MCF 10A (cell line): ENCODE measurements at regions of chr4 and their contacts with region 1.

Region 1: DNA sequence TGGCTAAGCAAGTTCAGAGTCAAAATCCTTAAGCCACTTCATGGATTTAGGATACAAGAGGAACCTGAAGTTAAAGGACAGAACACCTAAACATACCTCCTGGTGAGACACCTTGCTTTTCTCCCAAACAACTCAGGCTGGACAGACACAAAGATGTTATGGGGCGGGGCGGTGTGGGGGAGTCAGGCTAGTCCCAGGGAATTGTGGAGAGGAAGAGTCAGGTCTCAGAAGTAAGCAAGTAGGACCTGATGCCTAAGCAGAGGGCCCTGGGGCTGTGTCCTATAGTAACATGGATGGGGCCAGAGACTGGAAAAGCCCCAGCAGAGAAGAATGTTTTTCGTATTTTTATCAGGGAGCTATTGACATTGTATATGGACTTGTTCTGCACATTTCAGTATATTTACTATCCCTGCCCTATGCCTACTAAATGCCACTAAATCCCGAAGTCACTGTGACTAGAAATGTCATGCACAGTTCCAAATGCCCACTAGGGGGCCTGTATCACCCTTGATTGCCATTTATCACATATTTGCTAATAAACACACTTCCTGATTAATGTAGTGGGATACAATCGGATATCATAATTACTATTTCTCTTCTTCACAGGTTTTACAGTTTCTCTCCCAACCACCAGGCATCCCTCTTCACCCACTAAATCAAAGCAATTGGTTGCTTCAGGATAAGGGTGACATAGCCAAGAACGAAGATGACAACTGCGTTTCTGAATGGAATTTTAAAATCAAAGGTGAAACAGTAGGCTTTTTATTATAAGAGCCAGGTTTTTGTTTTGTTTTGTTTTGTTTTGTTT is 23.8 kb upstream of the ARHGAP10 start:
- DNase-seq: peak; percentile 71
- H3K4me3 Mint-ChIP-seq: no peak overlapping the region
- H3K27ac Mint-ChIP-seq: no peak overlapping the region
- H3K4me1 Mint-ChIP-seq: peaks cover 12% of the 10 kb centered on the region
- H3K27me3 Mint-ChIP-seq: no peaks in the 10 kb centered on the region
- CTCF ChIP-seq: peak; percentile 76

Region 2: GRCh38 chr4:147019061-147019460 is 689.0 kb before region 1 on chr4:
- CTCF ChIA-PET with region 1: no interaction called
- POLR2A ChIA-PET with region 1: no interaction called
- intact Hi-C with region 1: loop called (anchors 5 kb)
- DNase-seq: peak; percentile 84
- H3K4me3 Mint-ChIP-seq: no peak overlapping the region
- H3K27ac Mint-ChIP-seq: no peak overlapping the region
- H3K4me1 Mint-ChIP-seq: peaks cover 26% of the 10 kb centered on the region
- H3K27me3 Mint-ChIP-seq: no peaks in the 10 kb centered on the region
- CTCF ChIP-seq: peak; percentile 89

Region 3: DNA sequence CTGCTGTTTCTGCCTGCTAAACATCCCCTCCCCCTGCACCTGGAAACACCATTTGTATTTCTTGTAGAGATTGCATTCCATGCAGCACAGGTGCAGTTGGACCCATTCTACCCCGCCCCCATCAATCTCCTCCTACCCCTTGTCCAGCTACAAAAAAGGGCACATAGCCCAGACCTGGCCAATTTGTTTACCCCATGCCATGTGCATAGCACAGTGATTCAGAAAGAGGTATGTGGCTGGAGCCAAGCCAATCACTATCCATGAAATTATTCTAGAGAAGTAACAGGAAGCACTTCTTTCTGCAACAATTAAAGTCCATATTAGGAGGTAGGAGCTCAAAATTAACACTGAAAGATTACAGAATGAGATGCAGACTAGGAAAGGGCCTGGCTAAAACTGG is 111.1 kb before region 1 on chr4:
- CTCF ChIA-PET with region 1: interaction called, 4 read pairs
- POLR2A ChIA-PET with region 1: no interaction called
- intact Hi-C with region 1: loop called (anchors 2 kb)
- DNase-seq: peak; percentile 94
- H3K4me3 Mint-ChIP-seq: no peak overlapping the region
- H3K27ac Mint-ChIP-seq: peak overlapping the region; percentile 97
- H3K4me1 Mint-ChIP-seq: peaks cover 35% of the 10 kb centered on the region
- H3K27me3 Mint-ChIP-seq: no peaks in the 10 kb centered on the region
- CTCF ChIP-seq: no peak

Region 4: GRCh38 chr4:147633113-147633512 is 75.0 kb before region 1 on chr4:
- CTCF ChIA-PET with region 1: no interaction called
- POLR2A ChIA-PET with region 1: no interaction called
- intact Hi-C with region 1: no loop called
- DNase-seq: no peak
- H3K4me3 Mint-ChIP-seq: no peak overlapping the region
- H3K27ac Mint-ChIP-seq: peak overlapping the region; percentile 66
- H3K4me1 Mint-ChIP-seq: no peaks in the 10 kb centered on the region
- H3K27me3 Mint-ChIP-seq: no peaks in the 10 kb centered on the region
- CTCF ChIP-seq: no peak

Region 5: DNA sequence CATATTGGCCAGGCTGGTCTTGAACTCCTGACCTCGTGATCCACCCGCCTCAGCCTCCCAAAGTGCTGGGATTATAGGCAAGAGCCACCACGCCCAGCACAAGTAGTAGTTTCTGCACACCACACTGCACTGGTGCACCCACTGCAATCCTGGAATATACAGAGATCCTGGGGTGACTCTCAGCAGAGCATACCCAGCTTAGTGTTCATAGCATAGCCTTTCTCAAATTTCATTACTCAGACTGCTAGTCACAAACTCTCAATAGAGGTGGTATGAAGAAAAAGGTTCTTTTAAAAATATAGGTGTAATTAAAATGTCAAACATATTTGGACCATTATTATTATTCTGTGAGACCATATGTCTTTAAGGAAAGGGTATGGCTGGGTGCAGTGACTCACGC is 17.6 kb after region 1 on chr4:
- CTCF ChIA-PET with region 1: interaction called, 17 read pairs
- POLR2A ChIA-PET with region 1: interaction called, 21 read pairs
- intact Hi-C with region 1: no loop called
- DNase-seq: no peak
- H3K4me3 Mint-ChIP-seq: no peak overlapping the region
- H3K27ac Mint-ChIP-seq: no peak overlapping the region
- H3K4me1 Mint-ChIP-seq: peaks cover 12% of the 10 kb centered on the region
- H3K27me3 Mint-ChIP-seq: no peaks in the 10 kb centered on the region
- CTCF ChIP-seq: no peak

Region 6: GRCh38 chr4:147780137-147780777 is 72.2 kb after region 1 on chr4:
- CTCF ChIA-PET with region 1: no interaction called
- POLR2A ChIA-PET with region 1: no interaction called
- intact Hi-C with region 1: no loop called
- DNase-seq: no peak
- H3K4me3 Mint-ChIP-seq: no peak overlapping the region
- H3K27ac Mint-ChIP-seq: no peak overlapping the region
- H3K4me1 Mint-ChIP-seq: peaks cover 24% of the 10 kb centered on the region
- H3K27me3 Mint-ChIP-seq: no peaks in the 10 kb centered on the region
- CTCF ChIP-seq: no peak

Region 7: DNA sequence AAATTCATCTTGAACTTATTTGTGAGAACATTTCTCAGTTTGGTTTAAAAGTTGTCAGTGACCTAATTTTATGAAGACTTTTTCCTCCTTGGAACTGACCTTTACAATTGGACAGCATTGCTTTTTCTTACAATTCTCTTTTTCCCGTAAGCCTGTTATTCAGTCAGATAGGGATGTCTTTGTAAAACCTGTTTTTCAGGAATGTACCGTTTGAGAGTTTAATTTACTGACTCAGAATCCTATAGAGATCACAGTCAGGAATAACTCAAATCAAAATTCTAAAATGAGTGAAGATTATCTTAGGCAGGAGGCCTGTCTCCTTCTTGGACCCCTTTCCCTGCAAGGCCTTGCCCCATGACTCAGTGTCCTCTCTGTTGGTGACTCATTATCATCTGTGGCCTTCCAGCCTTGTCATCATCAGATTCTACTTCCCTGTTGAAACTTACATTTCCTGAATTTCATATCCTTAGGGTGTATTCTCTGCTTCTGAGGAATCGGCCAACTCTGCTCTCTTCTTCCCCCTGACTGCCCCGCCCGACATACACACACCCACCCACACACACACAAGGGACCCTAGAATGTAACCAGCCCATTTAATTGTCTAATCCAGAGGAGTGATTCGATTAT is 123.6 kb after region 1 on chr4:
- CTCF ChIA-PET with region 1: interaction called, 13 read pairs
- POLR2A ChIA-PET with region 1: interaction called, 7 read pairs
- intact Hi-C with region 1: no loop called
- DNase-seq: peak; percentile 91
- H3K4me3 Mint-ChIP-seq: peak overlapping the region; percentile 36
- H3K27ac Mint-ChIP-seq: peak overlapping the region; percentile 92
- H3K4me1 Mint-ChIP-seq: peaks cover 38% of the 10 kb centered on the region
- H3K27me3 Mint-ChIP-seq: no peaks in the 10 kb centered on the region
- CTCF ChIP-seq: no peak

Region 8: GRCh38 chr4:147837435-147837834 is 129.4 kb after region 1 on chr4:
- CTCF ChIA-PET with region 1: interaction called, 13 read pairs
- POLR2A ChIA-PET with region 1: no interaction called
- intact Hi-C with region 1: loop called (anchors 1 kb)
- DNase-seq: peak; percentile 51
- H3K4me3 Mint-ChIP-seq: no peak overlapping the region
- H3K27ac Mint-ChIP-seq: no peak overlapping the region
- H3K4me1 Mint-ChIP-seq: no peaks in the 10 kb centered on the region
- H3K27me3 Mint-ChIP-seq: no peaks in the 10 kb centered on the region
- CTCF ChIP-seq: peak; percentile 9

Region 9: GRCh38 chr4:147860960-147861359 is 152.9 kb after region 1 on chr4:
- CTCF ChIA-PET with region 1: interaction called, 247 read pairs
- POLR2A ChIA-PET with region 1: interaction called, 12 read pairs
- intact Hi-C with region 1: loop called (anchors 1 kb)
- DNase-seq: no peak
- H3K4me3 Mint-ChIP-seq: no peak overlapping the region
- H3K27ac Mint-ChIP-seq: no peak overlapping the region
- H3K4me1 Mint-ChIP-seq: peaks cover 1% of the 10 kb centered on the region
- H3K27me3 Mint-ChIP-seq: no peaks in the 10 kb centered on the region
- CTCF ChIP-seq: no peak